Mammary epithelial cell (primary cell): ENCODE measurements at regions of chr2 and their contacts with region 1.

Region 1: DNA sequence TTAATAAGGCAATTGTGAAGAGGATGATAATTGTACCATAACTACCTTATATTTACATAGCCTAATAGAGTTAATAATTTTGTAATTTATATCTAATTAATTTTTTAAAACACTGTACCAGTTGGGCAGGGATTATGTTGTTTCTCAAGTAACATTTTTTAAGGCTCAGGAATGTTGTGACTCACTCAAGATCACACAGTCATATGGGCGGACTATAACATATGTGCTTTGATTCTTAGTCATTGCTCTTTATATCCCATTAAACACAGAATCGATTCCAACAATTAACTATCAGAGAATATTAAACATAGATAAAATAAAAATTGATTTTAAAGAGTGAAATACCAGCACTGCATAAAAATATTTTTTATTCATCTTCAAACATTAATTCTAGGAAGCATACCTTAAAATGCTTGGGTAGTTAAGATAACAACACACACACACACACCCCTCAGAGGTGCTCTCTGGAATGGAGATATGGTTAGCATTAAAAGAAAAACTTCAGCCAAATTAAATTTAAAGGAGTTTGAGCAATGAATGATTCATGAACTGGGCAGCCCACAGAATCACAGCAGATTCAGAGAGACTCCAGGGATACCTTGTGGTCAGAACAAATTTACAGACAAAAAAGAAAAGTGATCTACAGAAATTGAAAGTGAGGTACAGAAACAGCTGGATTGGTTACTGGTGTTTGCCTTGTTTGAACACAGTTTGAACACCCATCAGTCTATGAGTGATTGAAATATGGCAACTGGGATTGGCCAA is 869.4 kb upstream of the ID2 start:
- DNase-seq: peak; percentile 80
- H3K4me3 ChIP-seq: no peak overlapping the region
- H3K27ac ChIP-seq: peak overlapping the region; percentile 92
- H3K4me1 ChIP-seq: peaks cover 24% of the 10 kb centered on the region
- H3K27me3 ChIP-seq: no peaks in the 10 kb centered on the region
- CTCF ChIP-seq: no peak

Region 2: GRCh38 chr2:7773362-7774360 is 38.8 kb before region 1 on chr2:
- CTCF ChIA-PET with region 1: no interaction called
- dilution Hi-C with region 1: no loop called
- in situ Hi-C with region 1: no loop called
- intact Hi-C with region 1: loop called (anchors 1 kb)
- DNase-seq: peak; percentile 99
- H3K4me3 ChIP-seq: peak overlapping the region in 2 of 3 experiments; percentile 7 to 24
- H3K27ac ChIP-seq: peak overlapping the region; percentile 99
- H3K4me1 ChIP-seq: peaks cover 31% of the 10 kb centered on the region
- H3K27me3 ChIP-seq: no peaks in the 10 kb centered on the region
- CTCF ChIP-seq: peak in 1 of 2 donors; percentile 5

Region 3: DNA sequence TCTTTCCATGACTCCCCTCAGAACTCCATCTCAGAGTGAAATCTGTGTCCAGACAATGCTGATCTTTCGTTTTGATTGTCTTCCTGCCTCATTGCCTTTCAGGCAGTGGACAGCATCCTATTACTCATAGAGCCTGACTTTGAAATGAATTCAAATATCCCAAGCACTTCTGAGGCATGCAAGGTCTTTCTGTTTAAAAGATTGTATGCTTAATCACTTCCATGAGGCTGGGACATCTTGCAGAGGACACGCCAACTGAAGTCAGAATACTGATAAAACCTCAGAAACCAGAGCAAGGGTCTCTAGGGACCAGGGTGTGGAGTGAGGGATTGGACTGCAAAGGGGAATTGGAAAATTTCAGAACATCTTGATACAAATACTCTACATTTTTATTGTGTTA is 32.9 kb after region 1 on chr2:
- CTCF ChIA-PET with region 1: no interaction called
- dilution Hi-C with region 1: no loop called
- in situ Hi-C with region 1: no loop called
- intact Hi-C with region 1: loop called (anchors 5 kb)
- DNase-seq: peak; percentile 54
- H3K4me3 ChIP-seq: no peak overlapping the region
- H3K27ac ChIP-seq: peak overlapping the region; percentile 56
- H3K4me1 ChIP-seq: peaks cover 42% of the 10 kb centered on the region
- H3K27me3 ChIP-seq: no peaks in the 10 kb centered on the region
- CTCF ChIP-seq: no peak

Region 4: GRCh38 chr2:7857904-7858303 is 45.5 kb after region 1 on chr2:
- CTCF ChIA-PET with region 1: no interaction called
- dilution Hi-C with region 1: no loop called
- in situ Hi-C with region 1: no loop called
- intact Hi-C with region 1: loop called (anchors 2 kb)
- DNase-seq: peak; percentile 91
- H3K4me3 ChIP-seq: no peak overlapping the region
- H3K27ac ChIP-seq: peak overlapping the region; percentile 71
- H3K4me1 ChIP-seq: peaks cover 23% of the 10 kb centered on the region
- H3K27me3 ChIP-seq: no peaks in the 10 kb centered on the region
- CTCF ChIP-seq: no peak

Region 5: GRCh38 chr2:7915302-7916091 is 103.1 kb after region 1 on chr2:
- CTCF ChIA-PET with region 1: no interaction called
- dilution Hi-C with region 1: no loop called
- in situ Hi-C with region 1: no loop called
- intact Hi-C with region 1: no loop called
- DNase-seq: no peak
- H3K4me3 ChIP-seq: no peak overlapping the region
- H3K27ac ChIP-seq: no peak overlapping the region
- H3K4me1 ChIP-seq: no peaks in the 10 kb centered on the region
- H3K27me3 ChIP-seq: no peaks in the 10 kb centered on the region
- CTCF ChIP-seq: no peak

Region 6: DNA sequence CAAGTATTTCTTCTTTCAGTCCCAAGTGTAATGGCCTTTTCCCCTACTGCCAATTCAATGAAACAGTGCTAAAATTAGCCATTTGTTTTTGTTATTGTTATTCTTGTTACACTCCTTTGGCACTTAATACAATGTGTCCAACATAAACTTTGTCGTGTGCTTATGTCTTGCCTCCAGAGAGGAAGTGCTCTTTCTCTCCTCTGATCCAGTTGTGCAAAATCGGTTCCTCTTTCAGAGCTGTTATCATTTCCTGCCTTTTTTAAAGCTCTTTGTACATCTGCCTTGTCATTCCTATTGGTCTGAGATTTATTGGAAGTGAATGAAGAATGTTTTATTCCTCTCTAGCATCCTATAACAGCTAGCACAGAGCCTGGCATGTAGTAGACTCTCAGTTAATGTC is 246.2 kb after region 1 on chr2:
- CTCF ChIA-PET with region 1: no interaction called
- dilution Hi-C with region 1: no loop called
- in situ Hi-C with region 1: no loop called
- intact Hi-C with region 1: no loop called
- DNase-seq: no peak
- H3K4me3 ChIP-seq: no peak overlapping the region
- H3K27ac ChIP-seq: no peak overlapping the region
- H3K4me1 ChIP-seq: no peaks in the 10 kb centered on the region
- H3K27me3 ChIP-seq: no peaks in the 10 kb centered on the region
- CTCF ChIP-seq: no peak